ENCODE measurements at regions of chr19 and their contacts with region 1.

Region 1: GRCh38 chr19:17922138-17922537 is 10.7 kb upstream of the CCDC124 start:
- DNase-seq: no peak
- ATAC-seq: no peak
- H3K4me3 ChIP-seq: no peak overlapping the region
- H3K27ac ChIP-seq: no peak overlapping the region
- H3K4me1 ChIP-seq: peaks cover 0 to 6% of the 10 kb centered on the region in 2 experiments; a peak in 2 of 5 replicates
- H3K27me3 ChIP-seq: no peaks in the 10 kb centered on the region
- CTCF ChIP-seq: no peak
- EP300 ChIP-seq: no peak
- POLR2A ChIP-seq: no peak
- RAD21 ChIP-seq: no peak

Region 2: GRCh38 chr19:17883627-17884410 is 38.3 kb before region 1 on chr19:
- CTCF ChIA-PET with region 1: no interaction called
- POLR2A ChIA-PET with region 1: no interaction called
- in situ Hi-C with region 1: no loop called
- intact Hi-C with region 1: loop called (anchors 5 kb)
- DNase-seq: peak; percentile 70 to 97 (median 94)
- ATAC-seq: peak; percentile 98
- H3K4me3 ChIP-seq: no peak overlapping the region
- H3K27ac ChIP-seq: no peak overlapping the region
- H3K4me1 ChIP-seq: peaks cover 0 to 10% of the 10 kb centered on the region in 2 experiments; a peak in 3 of 5 replicates
- H3K27me3 ChIP-seq: peaks cover 10 to 37% of the 10 kb centered on the region in 2 experiments; a peak in 3 of 5 replicates
- CTCF ChIP-seq: peak in 1 of 3 experiments; percentile 8; a peak in 1 of 6 replicates
- EP300 ChIP-seq: no peak
- POLR2A ChIP-seq: no peak
- RAD21 ChIP-seq: no peak